ENCODE measurements at regions of chr11 and their contacts with region 1.

Region 1: DNA sequence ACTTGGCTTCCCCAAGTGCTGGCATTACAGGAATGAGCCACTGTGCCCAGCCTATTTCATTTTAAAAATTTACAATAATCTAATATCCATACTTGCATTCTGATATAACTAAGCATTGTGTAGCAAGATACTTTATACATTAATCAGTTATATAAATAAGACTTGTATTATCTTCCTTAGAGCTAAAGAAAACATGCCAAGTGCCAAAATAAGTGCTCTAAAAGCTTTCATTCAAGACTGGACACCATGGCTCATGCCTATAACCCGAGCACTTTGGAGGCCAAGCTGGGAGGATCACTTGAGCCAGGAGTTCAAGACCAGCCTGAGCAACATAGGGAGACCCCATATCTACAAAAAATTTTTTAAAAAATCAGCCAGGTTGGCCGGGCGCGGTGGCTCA is 78.3 kb upstream of the CHRM4 start:
- DNase-seq: no peak
- ATAC-seq: no peak
- H3K4me3 ChIP-seq: no peak overlapping the region
- H3K4me3 Mint-ChIP-seq: no peak overlapping the region
- H3K27ac ChIP-seq: no peak overlapping the region
- H3K27ac Mint-ChIP-seq: no peak overlapping the region
- H3K4me1 ChIP-seq: no peaks in the 10 kb centered on the region
- H3K4me1 Mint-ChIP-seq: peaks cover 23 to 32% (median 28%) of the 10 kb centered on the region in 3 donors
- H3K27me3 ChIP-seq: no peaks in the 10 kb centered on the region
- H3K27me3 Mint-ChIP-seq: no peaks in the 10 kb centered on the region

Region 2: GRCh38 chr11:46537537-46538295 is 67.8 kb after region 1 on chr11:
- CTCF ChIA-PET with region 1: no interaction called
- POLR2A ChIA-PET with region 1: interaction called in 1 of 2 experiments, 10 read pairs
- DNase-seq: peak; percentile 17 to 80 (median 50)
- ATAC-seq: peak; percentile 75 to 88 (median 81)
- H3K4me3 ChIP-seq: no peak overlapping the region
- H3K4me3 Mint-ChIP-seq: no peak overlapping the region
- H3K27ac ChIP-seq: no peak overlapping the region
- H3K27ac Mint-ChIP-seq: no peak overlapping the region
- H3K4me1 ChIP-seq: no peaks in the 10 kb centered on the region
- H3K4me1 Mint-ChIP-seq: peaks cover 39 to 58% (median 41%) of the 10 kb centered on the region in 3 donors
- H3K27me3 ChIP-seq: no peaks in the 10 kb centered on the region
- H3K27me3 Mint-ChIP-seq: no peaks in the 10 kb centered on the region